ENCODE measurements at regions of chr15 and their contacts with region 1.

Region 1: DNA sequence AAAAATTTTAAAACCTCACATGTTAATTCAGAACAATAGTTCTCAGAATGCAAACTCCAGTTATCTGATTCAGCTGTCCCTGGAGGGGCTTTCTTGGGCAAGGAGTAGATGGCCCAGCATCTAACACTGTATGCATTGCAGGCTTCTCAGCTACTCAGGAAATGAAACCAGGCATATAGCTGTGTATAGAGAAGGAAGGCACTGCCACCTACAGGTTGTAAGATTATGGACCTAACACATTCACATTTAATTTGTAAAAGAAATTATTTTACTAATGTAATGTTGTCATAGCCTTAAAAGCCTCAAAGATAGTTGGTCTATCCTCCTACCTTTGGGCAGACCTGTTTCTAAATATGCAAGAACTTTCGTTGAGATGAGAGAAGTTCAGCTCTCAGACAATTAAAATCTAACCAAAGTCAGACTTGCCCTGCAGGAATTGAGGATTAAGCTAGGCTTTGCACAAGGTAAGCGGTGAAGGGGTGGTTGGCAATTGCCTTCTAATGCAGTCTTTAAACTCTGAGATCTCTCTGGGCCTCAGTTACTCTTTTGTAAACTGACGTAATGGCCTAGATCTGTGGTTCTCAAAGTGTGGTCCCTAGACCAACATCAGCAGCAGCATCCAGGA is 132.8 kb upstream of the SLC24A5 start:
- DNase-seq: peak in 1 of 2 experiments; percentile 27
- H3K4me3 ChIP-seq: no peak overlapping the region
- H3K4me3 Mint-ChIP-seq: no peak overlapping the region
- H3K27ac Mint-ChIP-seq: no peak overlapping the region
- H3K4me1 ChIP-seq: no peaks in the 10 kb centered on the region
- H3K4me1 Mint-ChIP-seq: no peaks in the 10 kb centered on the region
- H3K27me3 ChIP-seq: no peaks in the 10 kb centered on the region
- H3K27me3 Mint-ChIP-seq: peaks cover 6% of the 10 kb centered on the region
- CTCF ChIP-seq: peak; percentile 25 to 43

Region 2: GRCh38 chr15:47470983-47471382 is 517.0 kb before region 1 on chr15:
- CTCF ChIA-PET with region 1: interaction called, 16 read pairs
- POLR2A ChIA-PET with region 1: no interaction called
- intact Hi-C with region 1: loop called (anchors 1 kb)
- DNase-seq: no peak
- H3K4me3 ChIP-seq: no peak overlapping the region
- H3K4me3 Mint-ChIP-seq: no peak overlapping the region
- H3K27ac Mint-ChIP-seq: no peak overlapping the region
- H3K4me1 ChIP-seq: no peaks in the 10 kb centered on the region
- H3K4me1 Mint-ChIP-seq: no peaks in the 10 kb centered on the region
- H3K27me3 ChIP-seq: no peaks in the 10 kb centered on the region
- H3K27me3 Mint-ChIP-seq: peaks cover 7% of the 10 kb centered on the region
- CTCF ChIP-seq: no peak

Region 3: DNA sequence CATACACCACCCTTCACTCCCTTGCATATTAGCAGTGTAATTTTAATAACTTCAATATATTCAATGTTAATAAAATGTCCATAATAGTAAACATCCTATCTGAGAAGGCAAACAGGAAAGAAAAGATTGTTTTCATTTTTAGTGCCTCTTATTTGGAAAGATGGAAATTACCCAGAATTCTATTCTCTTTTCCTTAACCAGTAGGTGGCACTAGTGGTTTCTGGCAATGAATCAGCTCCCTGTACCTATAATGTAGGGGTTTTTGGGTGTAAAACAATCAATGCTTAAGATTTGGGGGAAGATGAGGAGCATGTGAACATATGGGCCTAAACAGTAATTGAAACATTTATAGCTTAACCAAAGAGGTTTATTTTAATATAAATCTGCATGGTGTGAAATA is 276.4 kb before region 1 on chr15:
- CTCF ChIA-PET with region 1: interaction called, 15 read pairs
- POLR2A ChIA-PET with region 1: no interaction called
- intact Hi-C with region 1: loop called (anchors 1 kb)
- DNase-seq: no peak
- H3K4me3 ChIP-seq: no peak overlapping the region
- H3K4me3 Mint-ChIP-seq: no peak overlapping the region
- H3K27ac Mint-ChIP-seq: no peak overlapping the region
- H3K4me1 ChIP-seq: no peaks in the 10 kb centered on the region
- H3K4me1 Mint-ChIP-seq: no peaks in the 10 kb centered on the region
- H3K27me3 ChIP-seq: no peaks in the 10 kb centered on the region; the same call in 1 of the 2 replicates
- H3K27me3 Mint-ChIP-seq: peaks cover 13% of the 10 kb centered on the region
- CTCF ChIP-seq: peak; percentile 36 to 42

Region 4: GRCh38 chr15:47917881-47918280 is 70.1 kb before region 1 on chr15:
- CTCF ChIA-PET with region 1: no interaction called
- POLR2A ChIA-PET with region 1: no interaction called
- intact Hi-C with region 1: loop called (anchors 2 kb)
- DNase-seq: no peak
- H3K4me3 ChIP-seq: no peak overlapping the region
- H3K4me3 Mint-ChIP-seq: no peak overlapping the region
- H3K27ac Mint-ChIP-seq: no peak overlapping the region
- H3K4me1 ChIP-seq: no peaks in the 10 kb centered on the region
- H3K4me1 Mint-ChIP-seq: no peaks in the 10 kb centered on the region
- H3K27me3 ChIP-seq: no peaks in the 10 kb centered on the region; the same call in 1 of the 2 replicates
- H3K27me3 Mint-ChIP-seq: peaks cover 2% of the 10 kb centered on the region
- CTCF ChIP-seq: no peak

Region 5: DNA sequence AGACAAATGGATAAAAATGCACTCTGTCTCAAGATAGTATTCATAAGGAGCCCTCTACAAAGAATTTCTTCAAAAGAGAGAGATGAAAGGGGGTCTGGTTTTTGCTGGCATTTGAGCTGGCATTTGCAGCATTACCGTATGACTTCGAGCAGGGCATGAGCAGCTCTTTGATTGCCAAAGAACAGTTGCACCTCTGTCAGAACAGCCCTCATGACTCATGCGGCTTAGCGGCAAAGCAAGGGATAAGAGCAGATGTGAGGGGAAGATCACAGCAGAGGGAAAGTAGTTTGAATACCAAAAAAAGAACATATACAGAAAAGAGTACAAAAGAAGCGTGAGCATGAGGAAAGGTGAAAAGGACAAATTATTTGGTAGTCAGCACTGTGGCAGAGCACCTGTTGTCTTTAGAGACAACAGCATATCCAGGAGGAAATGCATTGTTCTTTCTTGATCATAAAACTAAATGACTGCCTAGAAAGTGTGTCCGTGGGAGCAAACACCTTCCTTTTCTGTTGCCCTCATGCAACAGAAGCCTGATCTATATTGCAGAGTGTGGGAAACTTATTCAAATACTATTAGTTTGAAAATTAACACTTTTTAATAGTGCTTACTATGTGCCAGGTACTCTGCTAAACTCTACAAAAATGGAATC is 52.3 kb after region 1 on chr15:
- CTCF ChIA-PET with region 1: no interaction called
- POLR2A ChIA-PET with region 1: no interaction called
- intact Hi-C with region 1: no loop called
- DNase-seq: no peak
- H3K4me3 ChIP-seq: no peak overlapping the region
- H3K4me3 Mint-ChIP-seq: no peak overlapping the region
- H3K27ac Mint-ChIP-seq: no peak overlapping the region
- H3K4me1 ChIP-seq: no peaks in the 10 kb centered on the region
- H3K4me1 Mint-ChIP-seq: no peaks in the 10 kb centered on the region
- H3K27me3 ChIP-seq: no peaks in the 10 kb centered on the region
- H3K27me3 Mint-ChIP-seq: peaks cover 6% of the 10 kb centered on the region
- CTCF ChIP-seq: no peak

Region 6: GRCh38 chr15:48250640-48251076 is 262.6 kb after region 1 on chr15:
- CTCF ChIA-PET with region 1: no interaction called
- POLR2A ChIA-PET with region 1: no interaction called
- intact Hi-C with region 1: loop called (anchors 1 kb)
- DNase-seq: peak in 1 of 2 experiments; percentile 51
- H3K4me3 ChIP-seq: no peak overlapping the region
- H3K4me3 Mint-ChIP-seq: no peak overlapping the region
- H3K27ac Mint-ChIP-seq: no peak overlapping the region
- H3K4me1 ChIP-seq: no peaks in the 10 kb centered on the region
- H3K4me1 Mint-ChIP-seq: no peaks in the 10 kb centered on the region
- H3K27me3 ChIP-seq: no peaks in the 10 kb centered on the region
- H3K27me3 Mint-ChIP-seq: peaks cover 21% of the 10 kb centered on the region
- CTCF ChIP-seq: peak; percentile 50 to 55

Measured in Caco-2 (cell line).